Activated CD4-positive, alpha-beta memory T cell treated with anti-CD3 and anti-CD28 coated beads for 36 hours (primary cell): ENCODE measurements at regions of chr20 and their contacts with region 1.

Region 1: DNA sequence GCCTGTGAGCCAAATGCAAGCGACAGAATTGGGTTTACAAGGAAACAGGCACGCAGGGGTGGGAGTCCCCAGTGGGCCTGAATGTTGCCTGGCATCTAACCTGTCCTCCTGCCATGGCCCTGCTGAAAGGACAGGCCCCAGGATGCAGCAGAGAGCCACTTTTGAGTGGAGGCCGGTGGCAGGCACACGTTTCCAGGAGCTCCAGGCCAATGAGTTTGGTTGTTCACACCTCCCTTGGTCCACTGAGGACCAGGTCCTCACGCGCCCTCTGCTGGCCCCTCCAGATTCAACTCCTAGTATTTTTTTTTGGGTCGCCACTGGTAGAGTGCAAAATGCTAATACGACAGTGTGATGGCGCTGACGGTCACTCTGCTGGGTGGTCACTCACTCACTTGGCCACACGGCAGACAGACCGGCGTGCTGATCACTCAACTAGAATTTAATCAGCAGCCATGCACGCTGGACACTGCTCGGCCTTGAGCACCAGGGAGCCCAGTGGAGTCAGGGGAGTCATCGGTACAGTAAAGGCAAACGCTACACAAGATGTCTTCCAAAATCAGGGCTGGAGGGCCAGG is 81.7 kb upstream of the NFATC2 start:
- DNase-seq: peak; percentile 85
- H3K4me3 Mint-ChIP-seq: no peak overlapping the region
- H3K27ac Mint-ChIP-seq: no peak overlapping the region
- H3K4me1 Mint-ChIP-seq: peaks cover 38% of the 10 kb centered on the region
- H3K27me3 Mint-ChIP-seq: peaks cover 4% of the 10 kb centered on the region

Region 2: GRCh38 chr20:51372176-51372803 is 252.0 kb before region 1 on chr20:
- CTCF ChIA-PET with region 1: interaction called, 27 read pairs
- POLR2A ChIA-PET with region 1: no interaction called
- intact Hi-C with region 1: loop called (anchors 1 kb)
- DNase-seq: peak; percentile 74
- H3K4me3 Mint-ChIP-seq: no peak overlapping the region
- H3K27ac Mint-ChIP-seq: no peak overlapping the region
- H3K4me1 Mint-ChIP-seq: peaks cover 4% of the 10 kb centered on the region
- H3K27me3 Mint-ChIP-seq: no peaks in the 10 kb centered on the region

Region 3: GRCh38 chr20:51378171-51378929 is 245.9 kb before region 1 on chr20:
- CTCF ChIA-PET with region 1: interaction called, 27 read pairs
- POLR2A ChIA-PET with region 1: no interaction called
- intact Hi-C with region 1: no loop called
- DNase-seq: peak; percentile 56
- H3K4me3 Mint-ChIP-seq: no peak overlapping the region
- H3K27ac Mint-ChIP-seq: no peak overlapping the region
- H3K4me1 Mint-ChIP-seq: peaks cover 2% of the 10 kb centered on the region
- H3K27me3 Mint-ChIP-seq: no peaks in the 10 kb centered on the region

Region 4: DNA sequence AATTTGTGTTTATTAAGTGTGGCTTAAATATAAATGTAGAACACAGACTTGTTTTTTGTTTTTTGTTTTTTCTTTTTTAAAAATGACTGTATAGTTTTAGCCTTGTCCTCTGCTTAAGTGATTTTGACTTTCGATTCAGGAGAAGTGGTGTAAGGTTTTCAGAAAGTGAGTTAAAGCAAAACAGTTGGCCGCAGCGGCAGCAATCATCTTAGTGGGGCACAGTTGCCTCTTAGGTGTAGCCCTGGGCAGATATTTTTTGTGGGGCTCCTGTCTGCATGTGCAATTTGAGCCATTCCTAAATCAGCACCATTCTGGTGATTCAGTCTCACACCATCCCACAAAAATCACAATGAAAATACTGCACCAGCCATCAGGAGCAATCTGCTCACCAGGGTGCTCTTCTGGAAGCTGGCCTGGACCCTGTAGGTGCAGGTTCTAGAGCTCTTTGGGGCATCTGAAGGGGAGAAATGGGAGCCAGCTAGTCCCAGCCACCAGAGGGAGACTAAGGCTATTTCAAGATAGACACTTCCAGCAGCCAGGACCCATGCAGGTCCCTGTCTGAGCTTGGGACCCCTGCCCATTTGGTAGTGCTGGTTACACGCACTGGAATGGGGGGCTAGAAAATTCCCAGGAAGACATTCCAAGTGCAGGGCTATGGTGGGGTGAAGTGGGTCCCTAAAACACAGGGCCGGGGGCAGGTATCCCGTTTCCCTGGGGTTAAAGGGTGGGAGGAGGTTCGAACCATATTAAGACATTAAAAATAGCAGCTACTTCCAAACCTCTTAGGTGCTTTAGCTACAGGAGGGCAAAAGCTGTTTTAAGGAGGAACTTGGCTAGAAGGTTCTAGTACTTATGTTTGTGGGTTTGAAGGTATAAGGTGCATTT is 238.4 kb before region 1 on chr20:
- CTCF ChIA-PET with region 1: interaction called, 11 read pairs
- POLR2A ChIA-PET with region 1: interaction called, 3 read pairs
- intact Hi-C with region 1: loop called (anchors 5 kb)
- DNase-seq: peak; percentile 50
- H3K4me3 Mint-ChIP-seq: no peak overlapping the region
- H3K27ac Mint-ChIP-seq: no peak overlapping the region
- H3K4me1 Mint-ChIP-seq: peaks cover 73% of the 10 kb centered on the region
- H3K27me3 Mint-ChIP-seq: no peaks in the 10 kb centered on the region